ENCODE measurements at regions of chr15 and their contacts with region 1.

Region 1: DNA sequence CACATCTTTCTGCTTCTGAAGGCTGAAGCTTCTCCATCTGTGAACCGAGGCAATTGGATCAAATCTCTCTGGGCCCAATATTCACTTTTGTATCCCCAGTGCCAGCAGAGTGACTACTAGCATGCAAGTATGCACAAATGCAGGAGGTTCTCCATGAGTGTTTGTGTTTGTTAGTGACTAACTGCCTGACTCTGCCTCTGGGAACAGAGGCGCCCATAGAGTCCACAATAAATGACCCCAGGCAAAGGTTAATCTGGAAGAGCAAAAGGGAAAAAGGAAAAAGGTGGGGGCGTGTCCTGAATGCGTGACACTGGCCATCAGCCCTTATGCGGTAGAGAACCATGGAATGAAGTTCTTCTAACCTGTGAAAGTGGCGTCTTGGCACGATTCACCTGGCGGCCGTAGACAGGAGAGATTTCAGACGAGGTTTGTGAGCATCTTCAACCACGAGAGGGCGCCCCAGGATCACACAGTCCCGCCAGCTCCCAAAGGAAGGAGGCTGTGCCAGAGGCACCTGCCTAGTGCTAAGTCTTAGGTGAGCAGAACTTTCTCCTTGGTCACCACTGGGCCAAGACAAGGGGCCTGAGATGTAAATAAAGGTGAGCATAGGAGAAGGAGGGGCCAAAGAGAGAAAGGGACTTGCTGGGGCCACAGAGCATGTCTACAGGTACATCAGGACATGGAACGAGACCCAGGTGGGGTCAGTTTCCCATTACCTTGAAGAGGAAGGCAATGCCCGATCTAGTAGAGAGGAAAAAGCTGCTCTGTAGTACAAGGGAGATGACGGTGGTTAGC is 44.2 kb downstream of the RBPMS2 start:
- DNase-seq: peak; percentile 65 to 88
- H3K4me3 ChIP-seq: no peak overlapping the region
- H3K27ac ChIP-seq: no peak overlapping the region
- H3K4me1 ChIP-seq: no peaks in the 10 kb centered on the region
- H3K27me3 ChIP-seq: no peaks in the 10 kb centered on the region
- CTCF ChIP-seq: peak; percentile 84

Region 2: GRCh38 chr15:64430000-64430735 is 301.0 kb before region 1 on chr15:
- CTCF ChIA-PET with region 1: no interaction called
- POLR2A ChIA-PET with region 1: no interaction called
- intact Hi-C with region 1: loop called (anchors 5 kb)
- DNase-seq: no peak
- H3K4me3 ChIP-seq: no peak overlapping the region
- H3K27ac ChIP-seq: no peak overlapping the region
- H3K4me1 ChIP-seq: no peaks in the 10 kb centered on the region
- H3K27me3 ChIP-seq: no peaks in the 10 kb centered on the region
- CTCF ChIP-seq: no peak

Region 3: GRCh38 chr15:64763874-64764273 is 32.7 kb after region 1 on chr15:
- CTCF ChIA-PET with region 1: no interaction called
- POLR2A ChIA-PET with region 1: interaction called, 11 read pairs
- intact Hi-C with region 1: no loop called
- DNase-seq: no peak
- H3K4me3 ChIP-seq: no peak overlapping the region
- H3K27ac ChIP-seq: no peak overlapping the region
- H3K4me1 ChIP-seq: no peaks in the 10 kb centered on the region
- H3K27me3 ChIP-seq: no peaks in the 10 kb centered on the region
- CTCF ChIP-seq: no peak

Region 4: DNA sequence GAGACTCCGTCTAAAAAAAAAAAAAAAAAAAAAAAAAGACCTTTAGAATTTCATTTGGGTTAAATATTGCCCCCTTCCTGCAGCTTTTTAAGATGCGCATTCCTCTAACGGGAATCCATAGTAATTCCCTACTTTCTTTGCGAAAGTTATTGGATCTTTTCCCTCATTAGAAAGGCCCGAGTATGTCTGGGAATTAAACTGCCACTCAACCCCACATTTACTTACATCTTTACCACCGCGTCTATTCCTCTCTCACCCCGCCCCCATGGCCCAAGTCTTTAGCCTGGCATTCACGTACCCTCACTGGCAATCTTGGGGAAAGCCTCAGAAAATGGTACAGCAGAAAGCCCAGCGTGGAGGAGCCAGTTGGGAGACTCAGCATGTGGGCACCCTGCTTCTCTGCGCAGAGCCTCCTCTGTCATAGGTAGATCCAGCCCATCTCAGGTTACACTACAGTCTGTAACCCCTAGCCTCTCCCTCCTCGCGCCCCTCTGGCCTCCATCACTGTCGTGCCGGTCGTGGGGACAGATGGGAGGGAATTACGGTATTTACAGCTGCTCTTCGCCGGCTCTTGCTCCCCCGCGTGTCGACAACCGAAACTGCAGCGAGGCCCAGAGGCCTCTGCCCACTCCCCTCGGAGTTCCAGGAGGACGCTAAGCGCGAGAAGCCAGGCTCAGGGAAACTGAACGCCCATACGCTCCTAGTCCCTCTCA is 174.1 kb after region 1 on chr15:
- CTCF ChIA-PET with region 1: no interaction called
- POLR2A ChIA-PET with region 1: no interaction called
- intact Hi-C with region 1: loop called (anchors 1 kb)
- DNase-seq: peak in 1 of 2 experiments; percentile 68
- H3K4me3 ChIP-seq: peak overlapping the region; percentile 35; the same call in 1 of the 2 replicates
- H3K27ac ChIP-seq: no peak overlapping the region
- H3K4me1 ChIP-seq: no peaks in the 10 kb centered on the region
- H3K27me3 ChIP-seq: no peaks in the 10 kb centered on the region
- CTCF ChIP-seq: peak; percentile 73

Region 5: GRCh38 chr15:65244638-65245037 is 513.4 kb after region 1 on chr15:
- CTCF ChIA-PET with region 1: no interaction called
- POLR2A ChIA-PET with region 1: interaction called, 13 read pairs
- intact Hi-C with region 1: no loop called
- DNase-seq: no peak
- H3K4me3 ChIP-seq: no peak overlapping the region
- H3K27ac ChIP-seq: no peak overlapping the region
- H3K4me1 ChIP-seq: no peaks in the 10 kb centered on the region
- H3K27me3 ChIP-seq: no peaks in the 10 kb centered on the region
- CTCF ChIP-seq: no peak

Measured in PC-9 (cell line).